CD14-positive monocyte (primary cell): ENCODE measurements at regions of chr7 and their contacts with region 1.

Region 1: GRCh38 chr7:2519119-2519930 is at the start of gene LFNG:
- DNase-seq: peak; percentile 88 to 93 (median 92)
- H3K4me3 ChIP-seq: peak within 1 kb of the TSS; percentile 93 to 100 (median 94)
- H3K4me3 Mint-ChIP-seq: peak within 1 kb of the TSS; percentile 98 to 99
- H3K27ac ChIP-seq: peak within 1 kb of the TSS; percentile 85 to 100
- H3K27ac Mint-ChIP-seq: peak within 1 kb of the TSS; percentile 84 to 96 (median 93)
- H3K4me1 ChIP-seq: peaks cover 34 to 43% of the 10 kb centered on the region in 2 donors
- H3K4me1 Mint-ChIP-seq: peaks cover 40% of the 10 kb centered on the region
- H3K27me3 ChIP-seq: no peaks in the 10 kb centered on the region
- H3K27me3 Mint-ChIP-seq: peaks cover 0 to 6% (median 3%) of the 10 kb centered on the region in 3 donors
- CTCF ChIP-seq: no peak
- polyA plus RNA-seq, gene LFNG: 1.9 to 121 (median 2.2) TPM

Region 2: GRCh38 chr7:2403014-2403717 is 116.2 kb before region 1 on chr7 and contains the start of gene CHST12:
- intact Hi-C with region 1: loop called in 1 of 2 experiments (anchors 10 kb)
- DNase-seq: peak; percentile 89 to 93 (median 89)
- H3K4me3 ChIP-seq: peak within 1 kb of the TSS; percentile 68 to 85 (median 78)
- H3K4me3 Mint-ChIP-seq: peak within 1 kb of the TSS; percentile 82 to 90
- H3K27ac ChIP-seq: peak within 1 kb of the TSS in 1 of 2 donors; percentile 70
- H3K27ac Mint-ChIP-seq: peak within 1 kb of the TSS in 6 of 7 donors; percentile 10 to 66 (median 54)
- H3K4me1 ChIP-seq: peaks cover 66 to 69% of the 10 kb centered on the region in 2 donors
- H3K4me1 Mint-ChIP-seq: peaks cover 67% of the 10 kb centered on the region
- H3K27me3 ChIP-seq: no peaks in the 10 kb centered on the region
- H3K27me3 Mint-ChIP-seq: peaks cover 0 to 1% (median 0%) of the 10 kb centered on the region in 3 donors
- CTCF ChIP-seq: no peak
- polyA plus RNA-seq, gene CHST12: 5.8 to 10.6 (median 7.5) TPM

Region 3: GRCh38 chr7:2477447-2478398 is 41.6 kb before region 1 on chr7:
- intact Hi-C with region 1: loop called in 1 of 2 experiments (anchors 5 kb)
- DNase-seq: peak; percentile 72 to 73 (median 72)
- H3K4me3 ChIP-seq: peak overlapping the region in 1 of 3 experiments; percentile 46
- H3K4me3 Mint-ChIP-seq: peak overlapping the region; percentile 20 to 46
- H3K27ac ChIP-seq: no peak overlapping the region
- H3K27ac Mint-ChIP-seq: no peak overlapping the region
- H3K4me1 ChIP-seq: peaks cover 11 to 18% of the 10 kb centered on the region in 2 donors
- H3K4me1 Mint-ChIP-seq: peaks cover 16% of the 10 kb centered on the region
- H3K27me3 ChIP-seq: peaks cover 0 to 4% of the 10 kb centered on the region in 2 donors
- H3K27me3 Mint-ChIP-seq: peaks cover 10 to 26% (median 14%) of the 10 kb centered on the region in 3 donors
- CTCF ChIP-seq: peak; percentile 96

Region 4: GRCh38 chr7:2555121-2556052 is 36.1 kb after region 1 on chr7 and contains the start of gene BRAT1:
- intact Hi-C with region 1: loop called (anchors 5 kb)
- DNase-seq: peak; percentile 86 to 91 (median 88)
- H3K4me3 ChIP-seq: peak within 1 kb of the TSS; percentile 61 to 86 (median 66)
- H3K4me3 Mint-ChIP-seq: peak within 1 kb of the TSS; percentile 85 to 90
- H3K27ac ChIP-seq: peak within 1 kb of the TSS; percentile 97
- H3K27ac Mint-ChIP-seq: peak within 1 kb of the TSS; percentile 83 to 97 (median 90)
- H3K4me1 ChIP-seq: peaks cover 52 to 65% of the 10 kb centered on the region in 2 donors
- H3K4me1 Mint-ChIP-seq: peaks cover 51% of the 10 kb centered on the region
- H3K27me3 ChIP-seq: no peaks in the 10 kb centered on the region
- H3K27me3 Mint-ChIP-seq: no peaks in the 10 kb centered on the region
- CTCF ChIP-seq: peak; percentile 59
- polyA plus RNA-seq, gene BRAT1: 31.6 to 34.2 (median 32.5) TPM

Region 5: GRCh38 chr7:2632733-2633537 is 113.6 kb after region 1 on chr7:
- intact Hi-C with region 1: loop called (anchors 5 kb)
- DNase-seq: peak; percentile 61 to 74 (median 73)
- H3K4me3 ChIP-seq: peak overlapping the region; percentile 79 to 96 (median 91)
- H3K4me3 Mint-ChIP-seq: peak overlapping the region; percentile 97
- H3K27ac ChIP-seq: peak overlapping the region; percentile 89 to 96
- H3K27ac Mint-ChIP-seq: peak overlapping the region; percentile 94 to 98 (median 98)
- H3K4me1 ChIP-seq: peaks cover 51 to 54% of the 10 kb centered on the region in 2 donors
- H3K4me1 Mint-ChIP-seq: peaks cover 37% of the 10 kb centered on the region
- H3K27me3 ChIP-seq: no peaks in the 10 kb centered on the region
- H3K27me3 Mint-ChIP-seq: peaks cover 1 to 4% (median 1%) of the 10 kb centered on the region in 3 donors
- CTCF ChIP-seq: no peak

Region 6: GRCh38 chr7:2645274-2645868 is 126.0 kb after region 1 on chr7:
- intact Hi-C with region 1: no loop called
- DNase-seq: peak; percentile 41 to 60 (median 43)
- H3K4me3 ChIP-seq: peak overlapping the region in 1 of 3 experiments; percentile 64
- H3K4me3 Mint-ChIP-seq: peak overlapping the region; percentile 68 to 75
- H3K27ac ChIP-seq: peak overlapping the region; percentile 61 to 75
- H3K27ac Mint-ChIP-seq: peak overlapping the region; percentile 84 to 92 (median 88)
- H3K4me1 ChIP-seq: peaks cover 70 to 74% of the 10 kb centered on the region in 2 donors
- H3K4me1 Mint-ChIP-seq: peaks cover 56% of the 10 kb centered on the region
- H3K27me3 ChIP-seq: no peaks in the 10 kb centered on the region
- H3K27me3 Mint-ChIP-seq: no peaks in the 10 kb centered on the region
- CTCF ChIP-seq: no peak